PC-3 (cell line): ENCODE measurements at regions of chr2 and their contacts with region 1.

Region 1: GRCh38 chr2:65129826-65130663 is at the start of gene RAB1A:
- DNase-seq: peak; percentile 99
- ATAC-seq: peak; percentile 97
- H3K4me3 ChIP-seq: peak within 1 kb of the TSS; percentile 100
- H3K27ac ChIP-seq: peak within 1 kb of the TSS; percentile 78
- H3K4me1 ChIP-seq: peaks cover 19% of the 10 kb centered on the region
- H3K27me3 ChIP-seq: no peaks in the 10 kb centered on the region
- CTCF ChIP-seq: peak; percentile 15; the same call in 1 of the 2 replicates
- total RNA-seq, gene RAB1A: 96.9 and 97.3 TPM in 2 replicates

Region 2: GRCh38 chr2:65056215-65057053 is 73.6 kb before region 1 on chr2 and contains the start of gene CEP68:
- CTCF ChIA-PET with region 1: interaction called, 11 read pairs
- POLR2A ChIA-PET with region 1: no interaction called
- intact Hi-C with region 1: no loop called
- DNase-seq: peak; percentile 98
- ATAC-seq: peak; percentile 95
- H3K4me3 ChIP-seq: peak within 1 kb of the TSS; percentile 83
- H3K27ac ChIP-seq: no peak within 1 kb of the TSS
- H3K4me1 ChIP-seq: peaks cover 11% of the 10 kb centered on the region
- H3K27me3 ChIP-seq: no peaks in the 10 kb centered on the region
- CTCF ChIP-seq: no peak
- total RNA-seq, gene CEP68: 3.4 and 7.0 TPM in 2 replicates

Region 3: DNA sequence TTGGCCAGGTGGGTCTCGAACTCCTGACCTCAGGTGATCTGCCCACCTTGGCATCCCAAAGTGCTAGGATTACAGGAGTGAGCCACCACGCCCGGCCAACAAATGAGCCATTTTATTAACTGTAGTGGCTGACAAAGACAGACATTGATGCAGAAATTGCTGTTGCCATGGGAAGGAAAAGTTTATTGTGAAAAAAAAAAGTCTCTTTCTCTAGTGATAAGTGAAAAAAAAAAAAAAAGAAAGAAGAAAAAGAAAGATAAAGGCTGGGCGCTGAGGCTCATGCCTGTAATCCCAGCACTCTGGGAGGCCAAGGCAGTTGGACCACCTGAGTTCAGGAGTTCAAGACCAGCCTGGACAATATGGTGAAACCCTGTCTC is 39.7 kb after region 1 on chr2:
- CTCF ChIA-PET with region 1: interaction called, 8 read pairs
- POLR2A ChIA-PET with region 1: interaction called, 4 read pairs
- intact Hi-C with region 1: loop called (anchors 1 kb)
- DNase-seq: no peak
- ATAC-seq: no peak; the same call in 1 of the 2 replicates
- H3K4me3 ChIP-seq: no peak overlapping the region
- H3K27ac ChIP-seq: no peak overlapping the region
- H3K4me1 ChIP-seq: peaks cover 9% of the 10 kb centered on the region; the same call in 1 of the 2 replicates
- H3K27me3 ChIP-seq: no peaks in the 10 kb centered on the region
- CTCF ChIP-seq: no peak

Region 4: DNA sequence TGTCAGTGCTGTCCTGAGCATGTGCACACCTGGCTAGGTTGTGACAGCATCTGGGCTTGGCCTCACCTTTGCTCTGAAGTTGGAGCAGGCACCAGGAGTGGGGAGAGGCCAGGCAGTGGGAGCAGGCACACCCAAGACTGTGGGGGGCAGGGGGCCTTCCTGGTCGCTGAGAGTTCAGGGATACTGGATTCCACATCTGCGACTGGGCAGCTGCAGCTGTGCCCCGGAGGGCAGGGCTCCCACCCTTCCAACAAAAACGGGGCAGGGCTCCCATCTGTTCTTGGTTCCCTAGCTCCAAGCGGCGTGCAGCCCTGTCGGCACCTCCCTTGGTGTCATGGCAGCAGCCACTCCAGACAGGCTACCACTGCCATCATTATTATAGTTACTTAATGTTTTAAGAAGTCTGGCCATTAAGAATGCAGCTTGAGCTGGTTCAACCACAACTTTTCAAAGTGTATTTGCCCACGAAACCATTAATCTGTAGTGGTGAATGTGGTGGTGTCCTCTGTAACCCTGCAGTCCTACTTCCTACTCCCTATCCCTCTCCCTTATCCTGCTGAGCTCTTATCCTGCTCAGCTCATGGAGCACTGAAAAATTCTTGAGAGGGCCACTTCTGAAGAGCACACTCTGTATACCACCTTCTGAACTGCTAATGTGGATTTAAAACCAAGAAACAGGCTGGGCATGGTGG is 47.9 kb after region 1 on chr2:
- CTCF ChIA-PET with region 1: no interaction called
- POLR2A ChIA-PET with region 1: interaction called, 17 read pairs
- intact Hi-C with region 1: no loop called
- DNase-seq: no peak
- ATAC-seq: no peak
- H3K4me3 ChIP-seq: no peak overlapping the region
- H3K27ac ChIP-seq: no peak overlapping the region
- H3K4me1 ChIP-seq: peaks cover 9% of the 10 kb centered on the region; the same call in 1 of the 2 replicates
- H3K27me3 ChIP-seq: no peaks in the 10 kb centered on the region
- CTCF ChIP-seq: no peak

Region 5: GRCh38 chr2:65186872-65187851 is 57.1 kb after region 1 on chr2:
- CTCF ChIA-PET with region 1: no interaction called
- POLR2A ChIA-PET with region 1: no interaction called
- intact Hi-C with region 1: loop called (anchors 1 kb)
- DNase-seq: peak; percentile 90
- ATAC-seq: peak; percentile 81
- H3K4me3 ChIP-seq: peak overlapping the region; percentile 29; the same call in 1 of the 2 replicates
- H3K27ac ChIP-seq: peak overlapping the region; percentile 49
- H3K4me1 ChIP-seq: peaks cover 18% of the 10 kb centered on the region
- H3K27me3 ChIP-seq: no peaks in the 10 kb centered on the region
- CTCF ChIP-seq: peak; percentile 91